GM12878 (cell line): ENCODE measurements at regions of chr6 and their contacts with region 1.

Region 1: GRCh38 chr6:157461000-157461915 is 80.3 kb downstream of the ZDHHC14 start:
- DNase-seq: peak; percentile 92
- ATAC-seq: peak; percentile 69
- H3K4me3 ChIP-seq: no peak overlapping the region
- H3K27ac ChIP-seq: peak overlapping the region; percentile 44; the same call in 1 of the 2 replicates
- H3K4me1 ChIP-seq: peaks cover 40% of the 10 kb centered on the region
- H3K27me3 ChIP-seq: no peaks in the 10 kb centered on the region
- CTCF ChIP-seq: peak; percentile 41 to 58 (median 46); a peak in 5 of 6 replicates
- EP300 ChIP-seq: peak; percentile 97 to 98
- POLR2A ChIP-seq: no peak
- RAD21 ChIP-seq: peak; percentile 15; the same call in 1 of the 2 replicates

Region 2: DNA sequence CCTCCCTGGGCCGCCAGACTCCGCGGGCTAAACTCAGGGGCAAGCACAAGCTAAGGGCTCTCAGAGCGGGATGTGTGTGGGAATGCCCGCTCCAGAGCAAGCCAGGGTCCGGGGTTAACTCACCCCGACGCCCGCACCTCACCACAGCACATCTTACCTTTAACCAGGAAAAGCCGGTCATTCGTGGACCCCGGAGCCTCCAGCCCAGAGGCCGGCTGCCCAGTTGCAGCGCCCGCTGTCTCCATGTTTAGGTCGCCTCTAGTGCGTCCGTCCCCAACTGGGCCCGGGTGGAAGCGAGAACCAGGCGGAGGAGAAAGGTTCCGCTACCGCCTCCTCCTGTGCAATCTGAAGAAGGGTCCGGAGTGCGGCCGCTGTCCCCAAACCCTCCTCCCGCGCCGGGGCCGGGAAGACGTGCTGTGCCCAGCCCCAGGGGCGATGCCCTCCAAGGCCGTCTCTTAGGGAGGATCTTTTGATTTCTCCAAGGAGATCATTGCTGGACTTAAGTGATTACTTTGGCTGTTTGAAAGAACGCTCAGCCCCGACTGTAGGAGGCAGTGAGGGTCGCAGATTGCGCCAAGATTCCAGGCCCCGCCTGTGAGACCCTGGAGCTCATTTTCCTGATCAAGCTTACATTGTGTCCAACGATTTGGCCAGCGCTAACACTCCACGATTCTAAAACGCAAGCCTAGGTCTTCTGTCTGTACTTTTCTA is 137.8 kb before region 1 on chr6 and contains the start of gene TMEM242:
- CTCF ChIA-PET with region 1: interaction called, 8 read pairs
- POLR2A ChIA-PET with region 1: interaction called, 6 read pairs
- RAD21 ChIA-PET with region 1: interaction called, 78 read pairs
- SMC1A ChIA-PET with region 1: interaction called, 43 read pairs
- in situ Hi-C with region 1: loop called (anchors 5 kb)
- intact Hi-C with region 1: loop called (anchors 2 kb)
- DNase-seq: peak; percentile 74
- ATAC-seq: peak; percentile 91
- H3K4me3 ChIP-seq: peak within 1 kb of the TSS; percentile 86
- H3K27ac ChIP-seq: peak within 1 kb of the TSS; percentile 49
- H3K4me1 ChIP-seq: peaks cover 9% of the 10 kb centered on the region
- H3K27me3 ChIP-seq: no peaks in the 10 kb centered on the region
- CTCF ChIP-seq: peak in 2 of 3 experiments; percentile 13 to 14; a peak in 1 of 6 replicates
- EP300 ChIP-seq: no peak
- POLR2A ChIP-seq: peak; percentile 96
- RAD21 ChIP-seq: no peak; the same call in 1 of the 2 replicates
- polyA plus RNA-seq, gene TMEM242: 6.1 to 6.2 TPM

Region 3: DNA sequence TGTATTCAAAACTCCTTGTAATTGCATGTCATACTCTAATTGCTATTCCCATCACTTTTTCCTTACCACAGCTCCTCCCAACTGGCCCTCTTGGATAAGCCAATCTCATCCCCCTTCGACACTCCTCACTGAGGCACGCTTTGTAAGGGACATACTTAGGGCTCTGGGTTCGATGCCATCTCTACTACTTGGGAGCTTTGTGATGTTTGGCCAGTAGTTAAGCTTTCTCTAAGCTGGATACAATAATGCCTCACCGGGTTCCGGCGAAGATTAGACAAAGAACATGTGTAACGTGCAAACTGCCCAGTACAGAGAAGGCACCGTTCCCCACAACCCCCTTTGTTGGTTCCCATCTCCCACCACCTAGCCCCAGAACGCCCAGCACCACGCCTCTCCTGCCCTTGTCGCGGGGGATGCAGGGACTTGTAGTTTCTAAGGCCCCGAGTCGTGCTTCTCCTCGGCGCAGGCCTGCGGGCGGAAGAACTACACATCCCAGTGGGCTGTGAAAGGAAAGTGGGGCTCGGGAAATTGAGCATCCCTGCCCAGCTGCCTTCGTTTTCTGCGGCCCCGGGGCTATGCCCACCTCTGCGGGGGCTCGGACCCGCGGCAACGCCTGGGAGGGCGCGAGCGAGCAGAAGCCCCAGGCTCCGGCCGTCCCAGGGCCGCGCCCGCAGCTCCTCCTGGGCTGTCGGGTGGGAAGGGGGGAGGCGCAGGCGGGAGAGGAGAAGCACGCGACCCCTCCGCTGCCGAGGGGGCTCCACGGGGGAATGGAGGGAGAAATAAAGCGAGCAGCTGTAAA is 81.4 kb before region 1 on chr6:
- CTCF ChIA-PET with region 1: interaction called, 26 read pairs
- POLR2A ChIA-PET with region 1: interaction called, 58 read pairs
- RAD21 ChIA-PET with region 1: interaction called, 100 read pairs
- SMC1A ChIA-PET with region 1: interaction called, 81 read pairs
- in situ Hi-C with region 1: no loop called
- intact Hi-C with region 1: loop called (anchors 1 kb)
- DNase-seq: peak; percentile 65
- ATAC-seq: peak; percentile 86
- H3K4me3 ChIP-seq: peak overlapping the region; percentile 98
- H3K27ac ChIP-seq: peak overlapping the region; percentile 50; the same call in 1 of the 2 replicates
- H3K4me1 ChIP-seq: no peaks in the 10 kb centered on the region
- H3K27me3 ChIP-seq: peaks cover 0 to 4% of the 10 kb centered on the region in 2 experiments; a peak in 1 of 4 replicates
- CTCF ChIP-seq: no peak
- EP300 ChIP-seq: no peak
- POLR2A ChIP-seq: 0 out of 2 replicates have a peak, but pooled peaks have one; percentile 42
- RAD21 ChIP-seq: no peak

Region 4: DNA sequence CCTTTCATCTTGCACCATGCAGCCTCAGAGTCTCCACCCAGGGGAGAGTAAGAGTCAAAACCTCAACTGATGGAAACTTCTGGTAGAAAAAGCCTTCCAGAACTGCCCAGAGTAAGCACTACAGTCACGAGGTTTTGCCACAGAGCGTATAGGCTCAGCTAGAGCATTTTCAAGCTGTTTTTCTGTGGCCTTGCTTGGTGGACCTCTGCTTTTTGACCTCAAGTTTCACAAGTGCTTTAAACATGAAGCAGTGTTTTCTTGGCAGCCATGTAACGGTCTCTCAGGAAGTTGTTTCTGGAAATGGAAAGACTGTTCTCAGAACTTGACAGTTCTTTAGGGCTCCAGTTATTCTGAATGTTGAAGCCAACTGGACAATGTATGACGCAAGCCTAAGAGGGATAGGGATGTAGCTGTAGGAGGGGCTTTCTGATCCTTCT is 66.2 kb after region 1 on chr6:
- CTCF ChIA-PET with region 1: interaction called, 40 read pairs
- POLR2A ChIA-PET with region 1: interaction called, 4 read pairs
- RAD21 ChIA-PET with region 1: interaction called, 15 read pairs
- SMC1A ChIA-PET with region 1: interaction called, 71 read pairs
- in situ Hi-C with region 1: no loop called
- intact Hi-C with region 1: no loop called
- DNase-seq: peak; percentile 48
- ATAC-seq: peak; percentile 93
- H3K4me3 ChIP-seq: no peak overlapping the region
- H3K27ac ChIP-seq: no peak overlapping the region
- H3K4me1 ChIP-seq: no peaks in the 10 kb centered on the region
- H3K27me3 ChIP-seq: no peaks in the 10 kb centered on the region
- CTCF ChIP-seq: peak in 1 of 3 experiments; percentile 23; a peak in 1 of 6 replicates
- EP300 ChIP-seq: peak; percentile 49 to 67; a peak in 3 of 4 replicates
- POLR2A ChIP-seq: no peak
- RAD21 ChIP-seq: no peak

Region 5: GRCh38 chr6:157563611-157564284 is 102.5 kb after region 1 on chr6:
- CTCF ChIA-PET with region 1: interaction called, 84 read pairs
- POLR2A ChIA-PET with region 1: interaction called, 170 read pairs
- RAD21 ChIA-PET with region 1: interaction called, 350 read pairs
- SMC1A ChIA-PET with region 1: interaction called, 431 read pairs
- in situ Hi-C with region 1: loop called (anchors 5 kb)
- intact Hi-C with region 1: loop called (anchors 1 kb)
- DNase-seq: peak; percentile 93
- ATAC-seq: peak; percentile 81
- H3K4me3 ChIP-seq: no peak overlapping the region; the same call in 1 of the 2 replicates
- H3K27ac ChIP-seq: peak overlapping the region; percentile 38; the same call in 1 of the 2 replicates
- H3K4me1 ChIP-seq: peaks cover 52% of the 10 kb centered on the region
- H3K27me3 ChIP-seq: no peaks in the 10 kb centered on the region
- CTCF ChIP-seq: peak in 2 of 3 experiments; percentile 26 to 36; a peak in 3 of 6 replicates
- EP300 ChIP-seq: peak; percentile 88 to 95
- POLR2A ChIP-seq: no peak
- RAD21 ChIP-seq: peak; percentile 45

Region 6: DNA sequence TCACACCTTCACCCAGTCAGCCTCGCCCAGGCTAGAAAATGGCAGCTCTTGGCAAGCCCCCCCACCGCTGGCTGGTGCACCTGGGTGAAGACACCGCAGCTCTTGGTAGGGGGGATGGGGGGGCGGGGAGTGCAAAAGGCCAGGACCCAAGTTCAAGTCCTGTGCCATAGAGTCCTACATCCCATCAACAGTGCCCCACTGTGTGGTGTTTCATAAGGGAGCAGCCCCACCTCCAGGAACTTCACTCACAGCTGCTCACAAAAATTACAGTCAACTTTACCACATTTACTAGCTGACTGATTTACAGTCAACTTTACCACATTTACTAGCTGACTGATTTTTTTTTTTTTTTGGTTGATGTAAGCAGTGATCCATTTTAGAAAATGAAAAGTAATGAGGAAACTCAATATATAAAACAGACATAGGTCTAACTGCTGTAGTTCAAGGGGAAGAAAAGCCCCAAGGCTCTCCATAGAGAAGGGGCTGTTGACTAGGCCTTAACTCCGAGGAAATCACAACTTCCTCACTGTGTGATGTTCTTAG is 152.8 kb after region 1 on chr6:
- CTCF ChIA-PET with region 1: interaction called, 26 read pairs
- POLR2A ChIA-PET with region 1: no interaction called
- RAD21 ChIA-PET with region 1: interaction called, 4 read pairs
- SMC1A ChIA-PET with region 1: interaction called, 13 read pairs
- in situ Hi-C with region 1: no loop called
- intact Hi-C with region 1: no loop called
- DNase-seq: no peak
- ATAC-seq: peak; percentile 79
- H3K4me3 ChIP-seq: no peak overlapping the region
- H3K27ac ChIP-seq: no peak overlapping the region
- H3K4me1 ChIP-seq: no peaks in the 10 kb centered on the region
- H3K27me3 ChIP-seq: no peaks in the 10 kb centered on the region
- CTCF ChIP-seq: peak in 2 of 3 experiments; percentile 13 to 44; a peak in 2 of 6 replicates
- EP300 ChIP-seq: no peak
- POLR2A ChIP-seq: no peak
- RAD21 ChIP-seq: peak; percentile 41; the same call in 1 of the 2 replicates

Region 7: DNA sequence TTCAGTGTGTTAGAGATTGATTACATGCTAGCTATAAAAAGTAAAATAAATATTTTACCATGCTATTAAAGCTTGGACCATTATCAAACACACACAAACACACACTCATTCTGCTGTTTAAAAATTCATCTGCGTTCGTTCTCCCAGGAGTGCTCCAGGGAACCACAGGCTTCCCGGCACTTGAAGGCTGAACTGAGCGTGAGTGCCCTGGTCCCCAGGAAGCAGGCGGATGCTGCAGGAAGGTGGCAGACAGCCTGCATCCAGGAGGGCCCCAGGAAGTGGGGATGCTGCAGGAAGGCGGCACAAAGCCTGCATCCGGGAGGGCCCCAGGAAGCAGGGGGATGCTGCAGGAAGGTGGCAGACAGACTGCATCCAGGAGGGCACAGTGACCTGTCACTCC is 214.6 kb after region 1 on chr6:
- CTCF ChIA-PET with region 1: no interaction called
- POLR2A ChIA-PET with region 1: no interaction called
- RAD21 ChIA-PET with region 1: no interaction called
- SMC1A ChIA-PET with region 1: no interaction called
- in situ Hi-C with region 1: no loop called
- intact Hi-C with region 1: no loop called
- DNase-seq: no peak
- ATAC-seq: no peak
- H3K4me3 ChIP-seq: no peak overlapping the region
- H3K27ac ChIP-seq: no peak overlapping the region
- H3K4me1 ChIP-seq: no peaks in the 10 kb centered on the region
- H3K27me3 ChIP-seq: no peaks in the 10 kb centered on the region; a peak in 1 of 4 replicates
- CTCF ChIP-seq: no peak
- EP300 ChIP-seq: no peak
- POLR2A ChIP-seq: no peak
- RAD21 ChIP-seq: no peak